ENCODE measurements at regions of chr22 and their contacts with region 1.

Region 1: DNA sequence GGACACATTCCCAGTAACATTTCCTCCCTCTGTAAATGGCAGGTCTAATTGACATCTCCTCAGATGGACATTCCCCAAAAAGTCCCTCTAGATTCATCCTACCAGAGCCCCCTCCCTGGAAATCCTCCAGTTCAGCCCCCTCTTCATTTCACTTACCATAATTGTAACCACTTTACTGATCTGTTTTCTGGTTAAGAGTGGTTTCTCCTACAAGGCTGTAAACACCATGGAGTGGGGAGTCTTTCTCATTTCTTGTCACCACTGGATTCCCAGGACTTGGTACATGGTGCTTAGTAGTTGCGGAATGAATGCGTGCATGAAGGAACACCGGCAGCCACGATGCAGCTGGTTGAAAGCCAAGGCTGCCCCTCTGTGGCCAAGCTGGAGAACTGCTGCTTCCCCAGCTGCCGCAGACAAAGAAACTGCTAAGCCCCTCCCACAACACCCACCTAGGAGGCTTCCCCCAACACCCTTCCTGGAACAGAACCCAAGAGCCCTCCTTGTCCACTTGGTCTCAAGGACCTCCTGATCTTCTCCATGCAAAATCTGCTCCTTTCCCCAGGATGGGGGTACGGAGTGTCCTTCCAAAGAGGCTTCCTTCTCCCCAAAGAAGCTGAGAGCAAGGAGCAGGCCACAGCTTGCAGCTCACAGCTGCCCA is 18.6 kb upstream of the SCARF2 start:
- DNase-seq: peak; percentile 82 to 90 (median 89)
- ATAC-seq: peak; percentile 80 to 87
- H3K4me3 ChIP-seq: no peak overlapping the region
- H3K27ac ChIP-seq: no peak overlapping the region
- H3K4me1 ChIP-seq: no peaks in the 10 kb centered on the region
- H3K27me3 ChIP-seq: no peaks in the 10 kb centered on the region

Region 2: GRCh38 chr22:20418211-20418788 is 37.9 kb before region 1 on chr22:
- intact Hi-C with region 1: loop called (anchors 1 to 5 kb)
- DNase-seq: peak; percentile 86 to 94 (median 94)
- ATAC-seq: peak; percentile 94 to 95
- H3K4me3 ChIP-seq: no peak overlapping the region
- H3K27ac ChIP-seq: no peak overlapping the region
- H3K4me1 ChIP-seq: peaks cover 2% of the 10 kb centered on the region
- H3K27me3 ChIP-seq: no peaks in the 10 kb centered on the region